ENCODE measurements at regions of chr11 and their contacts with region 1.

Region 1: GRCh38 chr11:121655537-121656327 is 203.0 kb upstream of the SORL1-AS1 start:
- DNase-seq: peak; percentile 82 to 96
- H3K4me3 ChIP-seq: peak overlapping the region; percentile 38 to 50 (median 46)
- H3K27ac ChIP-seq: peak overlapping the region; percentile 74 to 91 (median 86)
- H3K4me1 ChIP-seq: peaks cover 17 to 28% (median 25%) of the 10 kb centered on the region in 4 donors
- H3K27me3 ChIP-seq: no peaks in the 10 kb centered on the region
- CTCF ChIP-seq: peak in 5 of 7 experiments; percentile 70 to 83 (median 80)
- EP300 ChIP-seq: no peak
- POLR2A ChIP-seq: no peak

Region 2: GRCh38 chr11:122202951-122203456 is 547.3 kb after region 1 on chr11:
- intact Hi-C with region 1: loop called (anchors 5 kb)
- DNase-seq: peak; percentile 66 to 82
- H3K4me3 ChIP-seq: peak overlapping the region; percentile 37 to 47 (median 40)
- H3K27ac ChIP-seq: peak overlapping the region in 4 of 5 donors; percentile 14 to 75 (median 56)
- H3K4me1 ChIP-seq: peaks cover 4 to 36% (median 20%) of the 10 kb centered on the region in 4 donors
- H3K27me3 ChIP-seq: peaks cover 0 to 7% (median 0%) of the 10 kb centered on the region in 3 donors
- CTCF ChIP-seq: peak in 6 of 7 experiments; percentile 45 to 99 (median 90)
- EP300 ChIP-seq: no peak
- POLR2A ChIP-seq: no peak

Region 3: GRCh38 chr11:122505304-122506006 is 849.7 kb after region 1 on chr11:
- intact Hi-C with region 1: loop called (anchors 10 kb)
- DNase-seq: peak; percentile 68 to 93
- H3K4me3 ChIP-seq: no peak overlapping the region
- H3K27ac ChIP-seq: no peak overlapping the region
- H3K4me1 ChIP-seq: peaks cover 0 to 4% (median 0%) of the 10 kb centered on the region in 4 donors
- H3K27me3 ChIP-seq: peaks cover 0 to 6% (median 0%) of the 10 kb centered on the region in 3 donors
- CTCF ChIP-seq: peak in 5 of 7 experiments; percentile 52 to 71 (median 69)
- EP300 ChIP-seq: no peak
- POLR2A ChIP-seq: no peak

Measured in stomach (tissue), 19 donors.